ENCODE measurements at regions of chr18 and their contacts with region 1.

Region 1: GRCh38 chr18:9913526-9914333 is at the start of gene VAPA:
- DNase-seq: peak; percentile 86 to 99 (median 93)
- ATAC-seq: peak; percentile 82
- H3K4me3 ChIP-seq: peak within 1 kb of the TSS; percentile 82 to 99
- H3K4me3 Mint-ChIP-seq: peak within 1 kb of the TSS; percentile 92
- H3K27ac ChIP-seq: peak within 1 kb of the TSS; percentile 88 to 94
- H3K27ac Mint-ChIP-seq: peak within 1 kb of the TSS; percentile 96
- H3K4me1 ChIP-seq: peaks cover 41% of the 10 kb centered on the region
- H3K4me1 Mint-ChIP-seq: peaks cover 26% of the 10 kb centered on the region
- H3K27me3 ChIP-seq: no peaks in the 10 kb centered on the region
- H3K27me3 Mint-ChIP-seq: no peaks in the 10 kb centered on the region
- CTCF ChIP-seq: no peak
- total RNA-seq, gene VAPA: 169 to 177 TPM

Region 2: DNA sequence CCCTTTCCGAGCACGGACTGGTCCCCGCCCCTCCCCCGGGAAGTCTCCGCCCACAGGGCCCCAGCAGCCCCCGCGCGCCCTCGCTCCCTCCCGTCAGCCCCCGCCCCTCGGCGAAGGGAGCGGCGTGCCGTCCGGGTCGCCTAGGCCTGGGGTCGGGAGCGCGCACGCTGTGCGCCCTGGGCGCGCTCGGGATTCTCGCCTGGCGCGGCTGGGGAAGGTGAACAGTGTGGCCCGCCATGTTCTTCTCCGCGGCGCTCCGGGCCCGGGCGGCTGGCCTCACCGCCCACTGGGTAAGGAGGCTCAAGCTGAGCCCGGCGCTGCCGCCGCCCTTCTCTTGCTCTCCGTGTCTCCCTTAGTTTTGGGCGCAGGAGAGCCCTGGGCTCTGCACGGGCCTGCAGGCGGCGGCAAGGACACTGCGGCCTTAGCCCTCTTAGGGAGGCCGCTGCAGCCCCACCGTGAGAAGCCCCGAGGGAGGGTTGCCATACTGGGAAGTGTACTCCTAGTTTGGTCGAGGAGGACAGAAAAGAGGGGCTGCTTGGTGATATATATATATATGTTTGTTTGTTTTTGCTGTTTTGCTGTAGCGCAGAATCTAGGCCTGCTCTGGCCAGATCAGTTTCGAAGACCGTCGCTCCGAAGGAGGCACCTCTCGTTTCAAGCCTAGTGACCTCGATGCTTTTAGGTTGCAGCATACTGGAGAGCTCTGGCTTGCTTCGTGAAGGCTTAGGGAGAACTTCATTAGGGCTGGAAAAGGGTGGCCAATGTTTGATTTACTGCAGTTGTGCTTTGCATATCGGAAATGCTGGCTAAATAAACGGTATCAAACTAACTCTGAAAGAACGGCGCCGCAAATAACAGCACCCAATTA is 811.0 kb before region 1 on chr18 and contains the start of gene NDUFV2:
- CTCF ChIA-PET with region 1: no interaction called
- POLR2A ChIA-PET with region 1: interaction called, 3 read pairs
- intact Hi-C with region 1: loop called in 1 of 2 experiments (anchors 5 kb)
- DNase-seq: peak; percentile 96 to 99 (median 98)
- ATAC-seq: peak; percentile 95
- H3K4me3 ChIP-seq: peak within 1 kb of the TSS; percentile 55 to 82
- H3K4me3 Mint-ChIP-seq: peak within 1 kb of the TSS; percentile 89
- H3K27ac ChIP-seq: peak within 1 kb of the TSS; percentile 69 to 87
- H3K27ac Mint-ChIP-seq: peak within 1 kb of the TSS; percentile 94
- H3K4me1 ChIP-seq: peaks cover 46% of the 10 kb centered on the region
- H3K4me1 Mint-ChIP-seq: peaks cover 60% of the 10 kb centered on the region
- H3K27me3 ChIP-seq: no peaks in the 10 kb centered on the region
- H3K27me3 Mint-ChIP-seq: no peaks in the 10 kb centered on the region
- CTCF ChIP-seq: no peak
- total RNA-seq, gene NDUFV2: 229 to 249 TPM

Region 3: GRCh38 chr18:9474983-9475642 is 438.6 kb before region 1 on chr18 and contains the start of gene RALBP1:
- CTCF ChIA-PET with region 1: no interaction called
- POLR2A ChIA-PET with region 1: no interaction called
- intact Hi-C with region 1: loop called in 1 of 2 experiments (anchors 5 kb)
- DNase-seq: peak; percentile 96 to 99 (median 97)
- ATAC-seq: peak; percentile 98
- H3K4me3 ChIP-seq: peak within 1 kb of the TSS; percentile 90 to 93
- H3K4me3 Mint-ChIP-seq: peak within 1 kb of the TSS; percentile 98
- H3K27ac ChIP-seq: peak within 1 kb of the TSS; percentile 67 to 86
- H3K27ac Mint-ChIP-seq: peak within 1 kb of the TSS; percentile 97
- H3K4me1 ChIP-seq: peaks cover 9% of the 10 kb centered on the region
- H3K4me1 Mint-ChIP-seq: peaks cover 38% of the 10 kb centered on the region
- H3K27me3 ChIP-seq: no peaks in the 10 kb centered on the region
- H3K27me3 Mint-ChIP-seq: peaks cover 5% of the 10 kb centered on the region
- CTCF ChIP-seq: no peak
- total RNA-seq, gene RALBP1: 5.4 to 7.9 TPM

Region 4: GRCh38 chr18:9931670-9932069 is 17.9 kb after region 1 on chr18:
- CTCF ChIA-PET with region 1: no interaction called
- POLR2A ChIA-PET with region 1: interaction called, 22 read pairs
- intact Hi-C with region 1: loop called in 1 of 2 experiments (anchors 2 kb)
- DNase-seq: no peak
- ATAC-seq: no peak
- H3K4me3 ChIP-seq: no peak overlapping the region
- H3K4me3 Mint-ChIP-seq: no peak overlapping the region
- H3K27ac ChIP-seq: no peak overlapping the region
- H3K27ac Mint-ChIP-seq: no peak overlapping the region
- H3K4me1 ChIP-seq: peaks cover 38% of the 10 kb centered on the region
- H3K4me1 Mint-ChIP-seq: peaks cover 52% of the 10 kb centered on the region
- H3K27me3 ChIP-seq: no peaks in the 10 kb centered on the region
- H3K27me3 Mint-ChIP-seq: no peaks in the 10 kb centered on the region
- CTCF ChIP-seq: no peak

Region 5: DNA sequence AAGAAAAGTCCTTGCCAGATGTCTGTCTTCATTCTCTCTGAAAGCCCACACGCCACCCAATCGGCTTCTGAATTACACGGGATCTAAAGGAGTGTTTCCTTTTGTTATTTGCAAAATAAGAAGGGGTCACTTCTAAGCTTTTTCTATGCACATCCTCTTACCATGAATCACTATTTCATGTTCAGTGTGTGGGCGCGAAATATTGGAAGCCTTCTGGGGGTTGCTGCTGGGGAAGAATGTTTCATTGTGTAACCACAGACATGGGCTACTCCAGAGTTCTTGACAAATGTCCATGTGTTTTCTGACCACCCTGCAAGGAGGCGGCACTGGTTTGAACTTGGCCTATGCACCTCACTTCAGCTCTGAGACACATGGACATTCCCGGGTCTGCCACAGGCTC is 407.1 kb after region 1 on chr18:
- CTCF ChIA-PET with region 1: no interaction called
- POLR2A ChIA-PET with region 1: no interaction called
- intact Hi-C with region 1: no loop called
- DNase-seq: no peak
- ATAC-seq: no peak
- H3K4me3 ChIP-seq: no peak overlapping the region
- H3K4me3 Mint-ChIP-seq: no peak overlapping the region
- H3K27ac ChIP-seq: no peak overlapping the region
- H3K27ac Mint-ChIP-seq: no peak overlapping the region
- H3K4me1 ChIP-seq: no peaks in the 10 kb centered on the region
- H3K4me1 Mint-ChIP-seq: no peaks in the 10 kb centered on the region
- H3K27me3 ChIP-seq: no peaks in the 10 kb centered on the region
- H3K27me3 Mint-ChIP-seq: no peaks in the 10 kb centered on the region
- CTCF ChIP-seq: no peak

Region 6: GRCh38 chr18:10525371-10526210 is 611.9 kb after region 1 on chr18 and contains the start of gene NAPG:
- CTCF ChIA-PET with region 1: no interaction called
- POLR2A ChIA-PET with region 1: interaction called, 7 read pairs
- intact Hi-C with region 1: loop called (anchors 1 to 2 kb)
- DNase-seq: peak; percentile 78 to 97 (median 88)
- ATAC-seq: peak; percentile 86
- H3K4me3 ChIP-seq: peak within 1 kb of the TSS; percentile 90 to 98
- H3K4me3 Mint-ChIP-seq: peak within 1 kb of the TSS; percentile 97
- H3K27ac ChIP-seq: peak within 1 kb of the TSS; percentile 75 to 87
- H3K27ac Mint-ChIP-seq: peak within 1 kb of the TSS; percentile 96
- H3K4me1 ChIP-seq: peaks cover 31% of the 10 kb centered on the region
- H3K4me1 Mint-ChIP-seq: peaks cover 50% of the 10 kb centered on the region
- H3K27me3 ChIP-seq: no peaks in the 10 kb centered on the region
- H3K27me3 Mint-ChIP-seq: no peaks in the 10 kb centered on the region
- CTCF ChIP-seq: no peak
- total RNA-seq, gene NAPG: 33.2 to 35.8 TPM

Measured in CD8-positive, alpha-beta T cell (primary cell).